Activated naive CD4-positive, alpha-beta T cell treated with anti-CD3 and anti-CD28 coated beads for 36 hours (primary cell): ENCODE measurements at regions of chr1 and their contacts with region 1.

Region 1: GRCh38 chr1:41573785-41574713 is 89.6 kb upstream of the EDN2 start:
- DNase-seq: peak; percentile 92
- H3K4me3 Mint-ChIP-seq: no peak overlapping the region
- H3K27ac Mint-ChIP-seq: peak overlapping the region; percentile 20
- H3K4me1 Mint-ChIP-seq: peaks cover 42% of the 10 kb centered on the region
- H3K27me3 Mint-ChIP-seq: no peaks in the 10 kb centered on the region

Region 2: DNA sequence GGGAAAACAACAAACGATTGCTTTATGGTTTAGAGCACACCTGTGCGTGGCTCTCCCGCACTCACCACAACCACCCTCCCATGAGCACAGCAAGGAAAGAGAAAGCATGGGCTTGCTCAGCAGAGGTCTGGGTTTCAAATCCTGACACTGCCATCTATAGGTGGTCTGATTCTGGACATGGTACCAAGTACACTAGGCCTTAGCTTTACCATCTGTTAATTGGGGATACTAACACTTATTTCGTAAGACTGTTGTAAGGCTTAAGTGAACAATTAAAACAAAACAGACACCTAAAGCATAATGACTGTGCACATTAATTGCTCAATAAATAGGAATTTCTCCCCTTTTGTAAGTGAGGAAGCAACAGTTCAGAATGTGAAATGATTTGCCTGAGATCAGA is 294.6 kb after region 1 on chr1:
- CTCF ChIA-PET with region 1: interaction called, 3 read pairs
- intact Hi-C with region 1: loop called (anchors 1 kb)
- DNase-seq: peak; percentile 58
- H3K4me3 Mint-ChIP-seq: no peak overlapping the region
- H3K27ac Mint-ChIP-seq: no peak overlapping the region
- H3K4me1 Mint-ChIP-seq: peaks cover 34% of the 10 kb centered on the region
- H3K27me3 Mint-ChIP-seq: no peaks in the 10 kb centered on the region